ENCODE measurements at regions of chr15 and their contacts with region 1.

Region 1: DNA sequence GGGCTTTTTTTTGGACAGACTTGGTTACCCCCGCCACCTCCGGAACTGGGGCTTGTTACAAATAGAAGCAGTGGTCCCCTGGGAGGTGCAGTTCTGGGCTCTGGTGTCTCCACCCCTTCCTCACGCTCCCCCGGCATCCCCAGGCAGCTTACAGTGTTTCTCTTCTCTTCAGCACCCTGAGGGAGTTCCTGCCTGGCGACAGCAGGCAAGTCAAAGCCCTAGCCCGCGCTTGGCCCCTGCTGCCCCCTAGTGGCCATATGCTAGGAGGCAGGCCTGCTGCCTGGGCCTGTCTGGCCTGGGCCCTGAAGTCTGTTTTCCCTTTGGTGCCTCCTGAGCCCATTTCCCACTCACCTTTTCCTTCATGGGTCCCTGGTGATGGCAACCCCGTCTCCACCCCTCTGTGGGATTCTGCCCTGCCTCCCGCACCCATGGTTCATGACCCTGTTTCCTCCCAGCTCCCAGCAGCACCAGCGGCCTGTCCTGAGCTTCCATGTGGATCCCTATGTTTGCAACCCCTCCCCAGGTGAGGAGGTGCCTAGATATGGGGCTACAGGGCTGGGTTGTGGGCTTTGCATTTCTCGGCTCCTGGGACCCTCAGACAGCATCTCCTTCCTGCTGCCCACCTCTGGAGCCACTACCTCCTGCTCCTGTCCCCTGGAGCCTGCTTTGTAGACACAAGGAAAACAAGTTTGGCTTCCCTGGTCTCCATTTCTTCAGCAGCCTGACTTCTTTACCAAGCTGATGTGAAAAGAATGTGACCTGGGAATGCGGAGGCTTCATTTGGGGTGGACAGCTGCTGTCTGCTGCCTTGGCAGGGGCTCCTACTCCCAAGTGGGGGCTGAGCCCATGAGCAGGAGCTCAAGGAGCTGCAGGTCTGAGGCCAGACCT is 2.2 kb downstream of the SNX22 start:
- DNase-seq: peak; percentile 86
- H3K4me3 ChIP-seq: no peak overlapping the region
- H3K27ac ChIP-seq: no peak overlapping the region
- H3K4me1 ChIP-seq: peaks cover 5% of the 10 kb centered on the region
- H3K27me3 ChIP-seq: peaks cover 5 to 12% of the 10 kb centered on the region in 2 experiments
- CTCF ChIP-seq: peak; percentile 97 to 100
- POLR2A ChIP-seq: peak; percentile 84

Region 2: GRCh38 chr15:63610200-63610841 is 543.4 kb before region 1 on chr15:
- CTCF ChIA-PET with region 1: interaction called, 11 read pairs
- POLR2A ChIA-PET with region 1: no interaction called
- dilution Hi-C with region 1: no loop called
- intact Hi-C with region 1: loop called (anchors 1 kb)
- DNase-seq: peak; percentile 85
- H3K4me3 ChIP-seq: no peak overlapping the region
- H3K27ac ChIP-seq: peak overlapping the region; percentile 18
- H3K4me1 ChIP-seq: peaks cover 18% of the 10 kb centered on the region
- H3K27me3 ChIP-seq: no peaks in the 10 kb centered on the region
- CTCF ChIP-seq: peak; percentile 70 to 73
- POLR2A ChIP-seq: no peak

Region 3: DNA sequence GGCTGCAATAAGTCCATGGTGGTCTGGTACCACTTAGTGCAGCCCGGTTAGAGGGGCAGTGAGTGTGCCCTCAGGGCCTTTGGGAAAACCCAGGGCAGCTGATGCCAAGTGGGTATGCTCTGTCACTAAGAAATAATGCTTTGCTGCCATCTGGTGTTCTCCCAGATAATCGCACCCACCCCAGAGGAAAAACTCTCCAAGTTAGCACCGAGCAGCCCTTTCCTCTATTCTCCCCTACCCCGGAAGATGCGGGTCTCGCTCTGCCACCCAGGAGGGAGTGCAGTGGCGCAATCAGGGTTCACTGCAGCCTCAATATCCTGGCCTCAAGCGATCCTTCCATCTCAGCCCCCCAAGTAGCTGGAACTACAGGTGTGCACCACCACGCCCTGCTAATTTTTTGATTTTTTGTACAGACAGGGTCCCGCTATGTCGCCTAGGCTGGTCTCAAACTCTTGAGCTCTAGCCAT is 86.1 kb before region 1 on chr15:
- CTCF ChIA-PET with region 1: interaction called, 13 read pairs
- POLR2A ChIA-PET with region 1: no interaction called
- dilution Hi-C with region 1: no loop called
- intact Hi-C with region 1: no loop called
- DNase-seq: peak; percentile 64
- H3K4me3 ChIP-seq: no peak overlapping the region
- H3K27ac ChIP-seq: no peak overlapping the region
- H3K4me1 ChIP-seq: peaks cover 17% of the 10 kb centered on the region
- H3K27me3 ChIP-seq: no peaks in the 10 kb centered on the region
- CTCF ChIP-seq: peak; percentile 63 to 81
- POLR2A ChIP-seq: no peak

Region 4: GRCh38 chr15:64093627-64094417 is 59.9 kb before region 1 on chr15 and contains the start of gene CIAO2A:
- CTCF ChIA-PET with region 1: interaction called, 4 read pairs
- POLR2A ChIA-PET with region 1: interaction called, 3 read pairs
- dilution Hi-C with region 1: no loop called
- intact Hi-C with region 1: loop called (anchors 1 kb)
- DNase-seq: peak; percentile 99
- H3K4me3 ChIP-seq: peak within 1 kb of the TSS; percentile 49 to 87 (median 66)
- H3K27ac ChIP-seq: peak within 1 kb of the TSS; percentile 86
- H3K4me1 ChIP-seq: peaks cover 35% of the 10 kb centered on the region
- H3K27me3 ChIP-seq: no peaks in the 10 kb centered on the region
- CTCF ChIP-seq: no peak
- POLR2A ChIP-seq: peak; percentile 37
- total RNA-seq, gene CIAO2A: 55.3 and 59.2 TPM in 2 replicates

Region 5: DNA sequence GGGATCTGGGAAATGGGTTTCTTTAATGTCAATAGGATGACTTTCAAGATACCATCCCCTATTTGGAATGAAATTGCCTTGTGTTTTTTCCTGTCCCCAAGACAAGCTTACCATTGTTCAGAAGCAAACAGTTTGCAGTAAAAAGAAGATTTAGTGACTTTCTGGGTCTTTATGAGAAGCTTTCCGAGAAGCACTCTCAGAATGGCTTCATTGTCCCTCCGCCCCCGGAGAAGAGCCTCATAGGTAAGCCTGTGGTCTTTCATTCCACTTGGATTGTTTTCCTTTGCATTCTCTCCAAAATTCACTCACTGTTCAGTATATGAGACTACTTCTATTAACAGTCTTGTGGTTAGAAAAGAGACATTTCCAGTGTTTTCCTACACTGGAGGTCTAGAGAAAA is 27.7 kb before region 1 on chr15:
- CTCF ChIA-PET with region 1: interaction called, 10 read pairs
- POLR2A ChIA-PET with region 1: no interaction called
- dilution Hi-C with region 1: no loop called
- intact Hi-C with region 1: no loop called
- DNase-seq: no peak
- H3K4me3 ChIP-seq: no peak overlapping the region
- H3K27ac ChIP-seq: no peak overlapping the region
- H3K4me1 ChIP-seq: no peaks in the 10 kb centered on the region
- H3K27me3 ChIP-seq: no peaks in the 10 kb centered on the region
- CTCF ChIP-seq: no peak
- POLR2A ChIP-seq: no peak

Region 6: GRCh38 chr15:64134345-64134829 is 19.3 kb before region 1 on chr15:
- CTCF ChIA-PET with region 1: interaction called, 17 read pairs
- POLR2A ChIA-PET with region 1: no interaction called
- dilution Hi-C with region 1: no loop called
- intact Hi-C with region 1: no loop called
- DNase-seq: no peak
- H3K4me3 ChIP-seq: no peak overlapping the region
- H3K27ac ChIP-seq: no peak overlapping the region
- H3K4me1 ChIP-seq: no peaks in the 10 kb centered on the region
- H3K27me3 ChIP-seq: no peaks in the 10 kb centered on the region
- CTCF ChIP-seq: no peak
- POLR2A ChIP-seq: no peak

Region 7: GRCh38 chr15:64141798-64142512 is 11.8 kb before region 1 on chr15:
- CTCF ChIA-PET with region 1: interaction called, 16 read pairs
- POLR2A ChIA-PET with region 1: no interaction called
- dilution Hi-C with region 1: no loop called
- intact Hi-C with region 1: no loop called
- DNase-seq: no peak
- H3K4me3 ChIP-seq: no peak overlapping the region
- H3K27ac ChIP-seq: no peak overlapping the region
- H3K4me1 ChIP-seq: peaks cover 12% of the 10 kb centered on the region
- H3K27me3 ChIP-seq: no peaks in the 10 kb centered on the region
- CTCF ChIP-seq: no peak
- POLR2A ChIP-seq: no peak

Region 8: DNA sequence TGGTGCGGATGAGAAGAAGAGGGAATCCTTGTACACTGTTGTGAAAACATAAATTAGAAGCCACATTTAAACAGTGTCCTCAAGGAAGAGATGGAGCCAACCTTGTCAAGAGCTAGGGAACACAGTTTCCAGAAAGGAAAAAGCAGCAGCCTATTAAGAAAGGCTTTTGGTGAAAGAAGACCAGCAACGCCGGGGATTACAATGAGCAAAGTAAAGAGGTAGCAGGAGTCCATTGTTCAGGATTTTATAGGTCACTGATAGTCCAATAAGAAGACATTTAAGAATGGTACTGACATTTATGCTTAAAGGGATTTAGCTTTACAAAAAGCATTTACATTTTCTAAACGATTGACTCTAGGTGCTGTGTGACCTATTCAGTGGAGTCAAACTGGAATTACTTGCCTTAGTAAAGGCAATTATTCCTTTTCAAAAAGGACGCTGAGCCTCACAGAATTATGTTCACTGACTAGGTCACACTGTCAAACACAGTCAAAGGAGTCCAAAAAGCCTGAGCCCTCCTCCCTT is 161.5 kb after region 1 on chr15:
- CTCF ChIA-PET with region 1: no interaction called
- POLR2A ChIA-PET with region 1: no interaction called
- dilution Hi-C with region 1: no loop called
- intact Hi-C with region 1: no loop called
- DNase-seq: no peak
- H3K4me3 ChIP-seq: no peak overlapping the region
- H3K27ac ChIP-seq: no peak overlapping the region
- H3K4me1 ChIP-seq: no peaks in the 10 kb centered on the region
- H3K27me3 ChIP-seq: no peaks in the 10 kb centered on the region
- CTCF ChIP-seq: no peak
- POLR2A ChIP-seq: no peak

Measured in endothelial cell of umbilical vein (primary cell).